ENCODE measurements at regions of chr4 and their contacts with region 1.

Region 1: DNA sequence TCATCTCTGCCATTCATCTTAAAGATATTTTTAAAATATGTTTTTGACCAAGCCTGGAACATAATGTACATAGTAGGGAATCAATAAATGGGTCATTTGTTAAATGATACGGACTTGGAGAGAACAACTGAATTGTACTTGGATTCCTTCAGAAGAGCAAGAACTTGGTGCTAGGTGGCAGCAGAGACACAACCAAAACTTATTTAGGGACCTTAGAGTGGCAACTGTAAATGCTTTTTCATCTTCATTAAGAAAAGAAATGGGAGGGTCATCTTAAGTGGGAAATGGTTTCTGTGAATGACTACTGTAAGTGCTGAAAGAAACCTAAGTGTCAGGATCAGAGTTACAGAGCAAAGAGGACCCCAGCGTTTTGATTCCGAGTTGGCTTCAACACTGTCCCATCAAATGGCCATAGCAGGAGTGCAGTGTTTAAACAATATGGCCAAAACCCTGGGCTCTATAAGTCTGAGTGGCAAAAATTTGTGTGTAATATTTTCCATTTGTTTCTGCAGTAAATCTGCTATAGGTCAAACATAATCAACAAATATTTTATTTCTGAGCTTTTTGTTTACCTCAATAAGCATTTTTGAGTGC is 213.6 kb downstream of the PALLD start:
- H3K4me3 Mint-ChIP-seq: no peak overlapping the region
- H3K27ac Mint-ChIP-seq: no peak overlapping the region
- H3K4me1 Mint-ChIP-seq: peaks cover 14% of the 10 kb centered on the region
- H3K27me3 Mint-ChIP-seq: peaks cover 15% of the 10 kb centered on the region

Region 2: DNA sequence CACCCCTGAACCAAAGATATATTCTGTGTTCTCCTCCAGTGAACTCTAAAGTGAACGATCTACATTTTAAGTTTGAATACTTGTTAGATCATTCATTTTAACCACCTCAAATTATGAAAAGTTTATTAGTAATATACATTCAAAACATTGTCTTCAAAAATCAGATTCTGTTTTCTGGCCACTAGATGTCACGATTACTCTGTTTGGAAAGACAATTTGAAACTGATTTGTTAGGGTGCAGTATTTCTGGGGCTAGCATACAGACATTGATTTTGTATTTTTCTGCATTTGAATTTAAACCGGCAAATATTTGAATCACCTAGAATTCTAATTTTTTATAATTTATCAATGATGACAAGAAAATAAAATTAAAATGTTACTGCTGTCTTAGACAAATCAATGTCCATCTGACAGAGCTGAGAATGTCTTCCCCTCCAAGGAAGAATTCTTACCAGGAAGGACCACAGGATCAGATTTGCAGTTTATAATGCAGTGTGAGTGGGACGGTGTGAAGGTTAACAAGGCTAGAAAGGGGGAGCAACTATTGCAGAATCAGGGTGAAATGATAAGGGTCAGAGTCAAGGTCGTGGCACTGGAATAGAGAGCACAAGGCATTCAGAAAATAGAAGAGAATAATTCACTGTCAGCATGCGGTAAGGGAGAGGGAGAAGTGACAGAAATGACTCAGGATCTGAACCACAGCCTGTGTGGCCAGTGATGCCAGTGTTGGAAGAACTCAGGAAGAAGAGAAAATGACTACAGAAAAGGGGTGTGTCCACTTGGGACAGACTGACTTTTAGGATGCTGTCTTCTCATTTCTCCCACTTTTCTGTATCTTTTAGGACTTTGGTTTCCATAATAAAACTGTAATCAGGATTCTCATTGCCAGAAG is 526.5 kb before region 1 on chr4:
- intact Hi-C with region 1: loop called (anchors 10 kb)
- H3K4me3 Mint-ChIP-seq: no peak overlapping the region
- H3K27ac Mint-ChIP-seq: no peak overlapping the region
- H3K4me1 Mint-ChIP-seq: peaks cover 11% of the 10 kb centered on the region
- H3K27me3 Mint-ChIP-seq: no peaks in the 10 kb centered on the region

Region 3: DNA sequence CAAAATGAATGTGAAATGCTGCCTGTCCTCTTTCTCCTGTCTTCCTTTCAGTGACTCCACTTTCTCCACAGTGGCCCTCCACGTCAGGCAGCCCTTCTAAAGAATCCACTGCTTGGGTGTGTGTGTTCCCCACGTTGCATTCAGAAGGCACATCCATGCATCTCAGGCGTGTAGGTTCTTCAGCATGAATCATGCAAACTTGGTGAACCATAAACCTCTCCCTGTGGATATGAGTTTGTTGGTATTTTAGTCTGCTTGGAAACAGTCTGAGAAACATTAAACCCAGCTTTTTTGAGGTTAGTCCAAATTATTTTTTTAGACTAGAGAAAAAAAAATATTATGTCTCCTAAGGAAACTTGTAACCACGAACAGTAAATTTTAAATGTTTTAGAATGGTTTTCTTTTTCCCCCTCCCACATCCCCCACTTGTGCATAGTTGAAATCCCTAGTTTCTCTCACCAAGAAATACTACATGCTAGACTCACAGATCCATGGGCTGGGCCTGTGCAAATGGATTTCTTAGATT is 48.0 kb after region 1 on chr4:
- intact Hi-C with region 1: no loop called
- H3K4me3 Mint-ChIP-seq: no peak overlapping the region
- H3K27ac Mint-ChIP-seq: peak overlapping the region; percentile 17
- H3K4me1 Mint-ChIP-seq: peaks cover 46% of the 10 kb centered on the region
- H3K27me3 Mint-ChIP-seq: peaks cover 12% of the 10 kb centered on the region

Region 4: DNA sequence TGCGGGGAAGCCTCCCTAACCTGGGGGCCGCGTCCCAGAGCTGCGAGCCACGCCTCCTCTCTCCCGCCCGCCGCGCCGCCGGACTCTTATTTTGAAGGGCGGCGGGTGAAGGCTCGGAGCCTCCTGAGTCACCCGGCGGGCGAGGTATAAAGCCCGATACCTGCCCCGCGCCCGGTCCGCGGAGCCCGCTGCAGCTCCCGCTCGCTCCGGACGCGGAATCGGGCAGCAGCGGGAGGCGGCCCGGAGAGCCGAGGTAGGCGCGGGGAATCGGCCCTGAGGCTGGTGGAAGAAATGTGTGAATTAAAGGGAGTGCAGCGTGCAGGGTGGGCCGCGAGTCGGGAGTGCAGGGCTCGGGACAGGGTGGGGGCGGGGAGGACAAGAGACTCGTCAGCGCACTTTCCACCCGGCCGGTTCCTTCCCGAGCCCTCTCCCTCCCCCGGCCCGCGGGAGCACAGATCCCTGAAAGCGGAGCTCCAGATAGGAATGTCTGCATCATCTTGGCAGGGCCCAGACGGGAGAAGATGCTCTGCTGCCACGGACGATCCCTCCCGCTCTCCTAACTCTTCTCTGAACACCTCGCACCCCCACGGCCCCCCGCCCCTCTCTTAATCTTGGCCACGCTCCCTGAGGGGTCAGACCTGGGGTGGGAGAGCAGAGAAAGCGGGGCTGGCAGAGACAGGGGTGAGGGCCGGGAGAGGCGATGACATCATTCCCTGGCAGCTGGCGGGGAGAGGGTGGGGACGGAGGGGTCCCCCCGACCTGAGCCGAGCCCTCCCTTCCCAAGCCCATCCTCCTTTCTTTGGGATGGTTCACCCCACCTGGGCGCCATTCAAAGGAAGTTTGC is 121.7 kb after region 1 on chr4:
- intact Hi-C with region 1: loop called (anchors 2 kb)
- H3K4me3 Mint-ChIP-seq: peak overlapping the region; percentile 77
- H3K27ac Mint-ChIP-seq: peak overlapping the region; percentile 92
- H3K4me1 Mint-ChIP-seq: peaks cover 50% of the 10 kb centered on the region
- H3K27me3 Mint-ChIP-seq: peaks cover 35% of the 10 kb centered on the region

Region 5: DNA sequence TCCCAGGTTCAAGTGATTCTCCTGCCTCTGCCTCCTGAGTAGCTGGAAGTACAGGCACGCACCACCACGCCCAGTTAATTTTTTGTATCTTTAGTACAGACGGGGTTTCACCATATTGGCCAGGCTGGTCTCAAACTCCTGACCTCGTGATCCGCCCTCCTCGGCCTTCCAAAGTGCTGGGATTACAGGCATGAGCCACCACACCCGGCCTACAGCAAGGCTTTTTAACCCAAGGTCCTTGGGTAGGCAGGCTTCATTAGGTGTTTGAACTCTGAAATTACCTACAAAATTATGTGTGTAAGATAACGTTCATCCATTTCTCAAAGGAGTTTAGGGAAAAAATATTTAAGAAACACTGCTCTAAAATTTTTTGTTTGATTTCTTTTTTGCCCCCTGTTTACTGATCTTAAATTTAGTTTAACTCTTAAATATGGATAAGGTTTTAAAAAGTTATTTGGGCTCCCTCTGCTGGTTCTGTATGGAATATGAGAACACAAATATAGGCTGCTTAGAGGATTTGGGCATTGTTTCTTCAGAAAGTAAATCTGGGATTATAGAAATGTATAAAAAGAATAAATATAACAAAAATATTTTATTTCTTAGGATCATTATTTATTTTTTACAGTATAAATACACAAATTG is 206.8 kb after region 1 on chr4:
- intact Hi-C with region 1: loop called (anchors 1 kb)
- H3K4me3 Mint-ChIP-seq: no peak overlapping the region
- H3K27ac Mint-ChIP-seq: no peak overlapping the region
- H3K4me1 Mint-ChIP-seq: no peaks in the 10 kb centered on the region
- H3K27me3 Mint-ChIP-seq: no peaks in the 10 kb centered on the region

Region 6: GRCh38 chr4:169485791-169486742 is 775.6 kb after region 1 on chr4:
- intact Hi-C with region 1: loop called (anchors 5 kb)
- H3K4me3 Mint-ChIP-seq: no peak overlapping the region
- H3K27ac Mint-ChIP-seq: no peak overlapping the region
- H3K4me1 Mint-ChIP-seq: no peaks in the 10 kb centered on the region
- H3K27me3 Mint-ChIP-seq: no peaks in the 10 kb centered on the region